Calu3 (cell line): ENCODE measurements at regions of chr1 and their contacts with region 1.

Region 1: GRCh38 chr1:45326627-45327623 is at the start of gene HPDL:
- DNase-seq: peak; percentile 62
- H3K4me3 Mint-ChIP-seq: peak within 1 kb of the TSS; percentile 72
- H3K27ac Mint-ChIP-seq: peak within 1 kb of the TSS; percentile 33
- H3K4me1 Mint-ChIP-seq: peaks cover 22% of the 10 kb centered on the region
- H3K27me3 Mint-ChIP-seq: no peaks in the 10 kb centered on the region
- CTCF ChIP-seq: no peak
- total RNA-seq, gene HPDL: 8.4 and 9.7 TPM in 2 replicates

Region 2: GRCh38 chr1:45266151-45266801 is 60.6 kb before region 1 on chr1:
- CTCF ChIA-PET with region 1: no interaction called
- intact Hi-C with region 1: no loop called
- DNase-seq: peak; percentile 14
- H3K4me3 Mint-ChIP-seq: no peak overlapping the region
- H3K27ac Mint-ChIP-seq: peak overlapping the region; percentile 86
- H3K4me1 Mint-ChIP-seq: peaks cover 9% of the 10 kb centered on the region
- H3K27me3 Mint-ChIP-seq: peaks cover 17% of the 10 kb centered on the region
- CTCF ChIP-seq: no peak

Region 3: DNA sequence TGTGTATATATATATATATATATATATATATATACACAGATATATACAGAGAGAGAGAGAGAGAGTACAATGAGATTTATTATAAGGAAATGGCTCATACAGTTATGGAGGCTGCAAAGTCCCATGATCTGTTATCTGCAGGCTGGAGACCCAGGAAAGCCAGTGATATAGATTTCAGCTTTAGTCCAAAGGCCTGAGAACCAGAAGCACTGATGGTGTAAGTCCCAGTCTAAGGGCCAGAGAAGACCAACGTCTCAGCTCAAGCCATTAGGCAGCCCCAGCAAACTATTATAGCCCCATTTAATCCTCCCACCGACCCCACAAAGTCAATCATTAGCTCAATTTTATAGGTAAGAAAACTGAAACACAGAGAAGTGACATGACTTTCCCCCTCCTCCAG is 35.2 kb before region 1 on chr1:
- CTCF ChIA-PET with region 1: no interaction called
- intact Hi-C with region 1: no loop called
- DNase-seq: no peak
- H3K4me3 Mint-ChIP-seq: no peak overlapping the region
- H3K27ac Mint-ChIP-seq: no peak overlapping the region
- H3K4me1 Mint-ChIP-seq: no peaks in the 10 kb centered on the region
- H3K27me3 Mint-ChIP-seq: peaks cover 13% of the 10 kb centered on the region
- CTCF ChIP-seq: no peak

Region 4: DNA sequence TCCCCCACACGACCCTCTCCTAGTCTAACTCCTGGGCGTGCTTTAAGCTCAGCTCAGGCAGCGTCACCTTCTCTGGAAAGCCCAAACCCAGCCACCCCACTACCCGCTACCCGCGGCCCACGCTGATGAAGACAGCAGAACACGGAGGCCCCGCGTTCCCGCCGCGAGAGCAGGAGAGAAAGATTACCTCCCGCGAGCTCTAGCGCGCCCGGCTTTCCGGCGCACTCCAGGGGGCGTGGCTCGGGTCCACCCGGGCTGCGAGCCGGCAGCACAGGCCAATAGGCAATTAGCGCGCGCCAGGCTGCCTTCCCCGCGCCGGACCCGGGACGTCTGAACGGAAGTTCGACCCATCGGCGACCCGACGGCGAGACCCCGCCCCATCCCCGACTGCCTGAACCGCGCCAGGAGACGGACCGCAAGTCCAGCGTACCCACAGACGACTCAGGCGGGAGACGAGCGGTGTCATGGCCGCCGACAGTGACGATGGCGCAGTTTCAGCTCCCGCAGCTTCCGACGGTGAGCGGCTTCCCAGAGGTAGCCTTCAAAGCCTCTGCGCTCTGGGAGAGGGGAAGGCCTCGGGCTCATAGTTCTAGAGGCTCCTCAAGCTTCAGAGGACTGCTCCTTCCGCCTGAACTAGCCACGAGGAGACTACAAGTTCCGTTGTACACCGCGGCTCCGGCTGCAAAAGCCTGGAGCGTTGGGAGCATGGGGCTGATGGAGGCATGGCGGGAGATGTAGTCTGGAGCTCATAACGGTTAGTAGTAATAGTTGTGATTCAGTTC is 13.1 kb after region 1 on chr1 and contains the starts of genes MUTYH and TOE1:
- CTCF ChIA-PET with region 1: interaction called, 10 read pairs
- intact Hi-C with region 1: no loop called
- DNase-seq: peak; percentile 98
- H3K4me3 Mint-ChIP-seq: peak within 1 kb of the TSS; percentile 84
- H3K27ac Mint-ChIP-seq: peak within 1 kb of the TSS; percentile 75
- H3K4me1 Mint-ChIP-seq: peaks cover 38% of the 10 kb centered on the region
- H3K27me3 Mint-ChIP-seq: no peaks in the 10 kb centered on the region
- CTCF ChIP-seq: no peak
- total RNA-seq, gene MUTYH: 48.1 and 53.1 TPM in 2 replicates
- total RNA-seq, gene TOE1: 14.2 TPM in 2 replicates

Region 5: DNA sequence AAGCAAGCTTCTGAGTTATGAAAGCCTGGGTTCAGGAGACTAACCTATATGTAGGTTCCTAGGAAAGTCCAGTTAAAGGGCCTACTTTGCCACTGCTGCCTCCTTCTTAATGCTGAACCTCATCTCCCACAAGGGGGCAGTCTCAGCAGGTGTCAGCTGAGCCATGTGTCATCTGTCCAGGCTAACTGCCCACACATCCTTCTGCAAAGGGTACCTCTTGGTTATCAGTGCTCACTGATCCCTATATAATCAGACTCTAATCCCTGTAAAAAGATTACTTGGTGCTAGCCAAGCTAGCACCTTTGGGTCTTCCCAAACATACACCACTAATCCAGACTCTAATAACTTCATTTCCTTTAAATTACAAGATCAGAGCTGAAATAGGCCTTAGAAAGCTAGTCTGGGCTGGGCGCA is 185.7 kb after region 1 on chr1:
- CTCF ChIA-PET with region 1: interaction called, 11 read pairs
- intact Hi-C with region 1: no loop called
- DNase-seq: peak; percentile 79
- H3K4me3 Mint-ChIP-seq: no peak overlapping the region
- H3K27ac Mint-ChIP-seq: no peak overlapping the region
- H3K4me1 Mint-ChIP-seq: peaks cover 46% of the 10 kb centered on the region
- H3K27me3 Mint-ChIP-seq: no peaks in the 10 kb centered on the region
- CTCF ChIP-seq: peak; percentile 72